GM12878 (cell line): ENCODE measurements at regions of chr2 and their contacts with region 1.

Region 1: GRCh38 chr2:152743002-152743401 is 24.6 kb downstream of the ARL6IP6 start:
- DNase-seq: no peak
- ATAC-seq: peak; percentile 86
- H3K4me3 ChIP-seq: no peak overlapping the region
- H3K27ac ChIP-seq: no peak overlapping the region
- H3K4me1 ChIP-seq: no peaks in the 10 kb centered on the region
- H3K27me3 ChIP-seq: no peaks in the 10 kb centered on the region
- CTCF ChIP-seq: peak; percentile 57 to 64 (median 57)
- EP300 ChIP-seq: no peak
- POLR2A ChIP-seq: no peak
- RAD21 ChIP-seq: peak; percentile 64

Region 2: DNA sequence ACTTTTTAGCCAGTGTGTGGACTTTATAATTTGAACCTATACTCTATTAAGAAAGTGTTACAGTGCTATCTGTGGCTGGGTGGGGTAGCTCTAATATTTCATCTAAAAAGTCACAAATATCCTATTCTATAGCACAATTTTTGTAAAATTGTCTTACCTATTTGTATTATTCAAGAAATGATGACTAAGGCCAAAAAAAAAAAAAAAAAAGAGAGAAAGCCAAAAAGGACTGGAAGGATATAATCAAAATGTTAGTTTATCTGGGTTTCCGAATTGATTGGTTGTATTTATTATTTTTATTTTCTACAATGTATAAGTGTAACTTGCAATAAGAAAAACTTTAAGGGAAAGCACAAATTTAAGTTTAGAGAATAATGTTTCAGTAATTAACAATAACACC is 19.1 kb before region 1 on chr2:
- CTCF ChIA-PET with region 1: interaction called, 15 read pairs
- POLR2A ChIA-PET with region 1: no interaction called
- RAD21 ChIA-PET with region 1: interaction called, 9 read pairs
- SMC1A ChIA-PET with region 1: interaction called, 28 read pairs
- in situ Hi-C with region 1: no loop called
- intact Hi-C with region 1: no loop called
- DNase-seq: no peak
- ATAC-seq: no peak; the same call in 2 of the 3 replicates
- H3K4me3 ChIP-seq: peak overlapping the region; percentile 35; the same call in 1 of the 2 replicates
- H3K27ac ChIP-seq: no peak overlapping the region; the same call in 1 of the 2 replicates
- H3K4me1 ChIP-seq: peaks cover 11% of the 10 kb centered on the region; the same call in 1 of the 2 replicates
- H3K27me3 ChIP-seq: no peaks in the 10 kb centered on the region
- CTCF ChIP-seq: no peak
- EP300 ChIP-seq: no peak
- POLR2A ChIP-seq: no peak
- RAD21 ChIP-seq: no peak

Region 3: DNA sequence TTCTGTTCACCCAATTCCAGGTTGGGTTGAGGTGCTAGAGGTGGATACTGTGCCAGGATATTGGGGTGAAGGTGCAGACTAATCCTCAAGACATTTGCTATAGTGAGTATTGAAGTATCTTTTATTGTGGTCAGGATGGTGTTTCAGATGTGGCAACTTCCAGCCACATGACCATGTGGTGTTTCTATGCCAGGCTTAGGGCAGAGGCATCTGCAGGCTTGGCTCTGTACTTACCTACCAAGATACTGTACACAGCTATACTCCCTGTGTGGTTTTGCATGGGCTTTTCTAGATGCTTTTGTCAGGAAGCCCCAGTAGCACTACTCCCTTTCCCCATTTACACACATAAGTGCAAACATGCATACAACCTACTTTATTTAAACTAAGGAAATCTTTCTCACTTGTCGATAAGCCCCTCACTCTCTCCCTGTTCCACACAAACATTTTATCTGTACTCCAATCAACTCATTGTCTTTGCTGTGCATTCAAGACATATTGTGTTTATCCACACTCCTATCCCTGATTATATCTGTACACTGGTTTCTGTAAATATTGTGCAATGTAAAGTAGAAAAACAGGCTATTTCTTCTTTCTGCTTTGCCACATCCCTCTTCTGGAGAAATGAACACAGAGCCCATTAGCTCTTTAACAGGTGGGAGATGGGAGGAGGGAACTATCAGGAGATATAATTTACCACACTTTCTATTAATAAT is 12.3 kb before region 1 on chr2:
- CTCF ChIA-PET with region 1: interaction called, 15 read pairs
- POLR2A ChIA-PET with region 1: no interaction called
- RAD21 ChIA-PET with region 1: interaction called, 4 read pairs
- SMC1A ChIA-PET with region 1: interaction called, 6 read pairs
- in situ Hi-C with region 1: no loop called
- intact Hi-C with region 1: no loop called
- DNase-seq: no peak
- ATAC-seq: peak; percentile 86
- H3K4me3 ChIP-seq: no peak overlapping the region
- H3K27ac ChIP-seq: no peak overlapping the region
- H3K4me1 ChIP-seq: peaks cover 11% of the 10 kb centered on the region; the same call in 1 of the 2 replicates
- H3K27me3 ChIP-seq: no peaks in the 10 kb centered on the region
- CTCF ChIP-seq: no peak
- EP300 ChIP-seq: no peak
- POLR2A ChIP-seq: no peak
- RAD21 ChIP-seq: no peak

Region 4: GRCh38 chr2:152826581-152827279 is 83.7 kb after region 1 on chr2:
- CTCF ChIA-PET with region 1: no interaction called
- POLR2A ChIA-PET with region 1: no interaction called
- RAD21 ChIA-PET with region 1: no interaction called
- SMC1A ChIA-PET with region 1: no interaction called
- in situ Hi-C with region 1: no loop called
- intact Hi-C with region 1: no loop called
- DNase-seq: no peak
- ATAC-seq: no peak
- H3K4me3 ChIP-seq: no peak overlapping the region
- H3K27ac ChIP-seq: no peak overlapping the region
- H3K4me1 ChIP-seq: no peaks in the 10 kb centered on the region
- H3K27me3 ChIP-seq: no peaks in the 10 kb centered on the region
- CTCF ChIP-seq: no peak
- EP300 ChIP-seq: no peak
- POLR2A ChIP-seq: no peak
- RAD21 ChIP-seq: no peak

Region 5: GRCh38 chr2:152890736-152891135 is 147.7 kb after region 1 on chr2:
- CTCF ChIA-PET with region 1: no interaction called
- POLR2A ChIA-PET with region 1: no interaction called
- RAD21 ChIA-PET with region 1: no interaction called
- SMC1A ChIA-PET with region 1: no interaction called
- in situ Hi-C with region 1: no loop called
- intact Hi-C with region 1: no loop called
- DNase-seq: no peak
- ATAC-seq: no peak
- H3K4me3 ChIP-seq: no peak overlapping the region
- H3K27ac ChIP-seq: no peak overlapping the region
- H3K4me1 ChIP-seq: no peaks in the 10 kb centered on the region
- H3K27me3 ChIP-seq: peaks cover 0 to 2% of the 10 kb centered on the region in 2 experiments; a peak in 1 of 4 replicates
- CTCF ChIP-seq: no peak
- EP300 ChIP-seq: no peak
- POLR2A ChIP-seq: no peak
- RAD21 ChIP-seq: no peak

Region 6: GRCh38 chr2:153174183-153174582 is 431.2 kb after region 1 on chr2:
- CTCF ChIA-PET with region 1: no interaction called
- POLR2A ChIA-PET with region 1: no interaction called
- RAD21 ChIA-PET with region 1: no interaction called
- SMC1A ChIA-PET with region 1: no interaction called
- in situ Hi-C with region 1: no loop called
- intact Hi-C with region 1: no loop called
- DNase-seq: no peak
- ATAC-seq: no peak
- H3K4me3 ChIP-seq: no peak overlapping the region
- H3K27ac ChIP-seq: no peak overlapping the region
- H3K4me1 ChIP-seq: no peaks in the 10 kb centered on the region
- H3K27me3 ChIP-seq: no peaks in the 10 kb centered on the region
- CTCF ChIP-seq: no peak
- EP300 ChIP-seq: no peak
- POLR2A ChIP-seq: no peak
- RAD21 ChIP-seq: no peak

Region 7: GRCh38 chr2:153222231-153223165 is 479.5 kb after region 1 on chr2:
- CTCF ChIA-PET with region 1: no interaction called
- POLR2A ChIA-PET with region 1: no interaction called
- RAD21 ChIA-PET with region 1: no interaction called
- SMC1A ChIA-PET with region 1: no interaction called
- in situ Hi-C with region 1: no loop called
- intact Hi-C with region 1: no loop called
- DNase-seq: no peak
- ATAC-seq: no peak
- H3K4me3 ChIP-seq: no peak overlapping the region
- H3K27ac ChIP-seq: no peak overlapping the region
- H3K4me1 ChIP-seq: no peaks in the 10 kb centered on the region
- H3K27me3 ChIP-seq: no peaks in the 10 kb centered on the region
- CTCF ChIP-seq: no peak
- EP300 ChIP-seq: no peak
- POLR2A ChIP-seq: no peak
- RAD21 ChIP-seq: no peak